SK-N-SH (cell line): ENCODE measurements at regions of chr14 and their contacts with region 1.

Region 1: DNA sequence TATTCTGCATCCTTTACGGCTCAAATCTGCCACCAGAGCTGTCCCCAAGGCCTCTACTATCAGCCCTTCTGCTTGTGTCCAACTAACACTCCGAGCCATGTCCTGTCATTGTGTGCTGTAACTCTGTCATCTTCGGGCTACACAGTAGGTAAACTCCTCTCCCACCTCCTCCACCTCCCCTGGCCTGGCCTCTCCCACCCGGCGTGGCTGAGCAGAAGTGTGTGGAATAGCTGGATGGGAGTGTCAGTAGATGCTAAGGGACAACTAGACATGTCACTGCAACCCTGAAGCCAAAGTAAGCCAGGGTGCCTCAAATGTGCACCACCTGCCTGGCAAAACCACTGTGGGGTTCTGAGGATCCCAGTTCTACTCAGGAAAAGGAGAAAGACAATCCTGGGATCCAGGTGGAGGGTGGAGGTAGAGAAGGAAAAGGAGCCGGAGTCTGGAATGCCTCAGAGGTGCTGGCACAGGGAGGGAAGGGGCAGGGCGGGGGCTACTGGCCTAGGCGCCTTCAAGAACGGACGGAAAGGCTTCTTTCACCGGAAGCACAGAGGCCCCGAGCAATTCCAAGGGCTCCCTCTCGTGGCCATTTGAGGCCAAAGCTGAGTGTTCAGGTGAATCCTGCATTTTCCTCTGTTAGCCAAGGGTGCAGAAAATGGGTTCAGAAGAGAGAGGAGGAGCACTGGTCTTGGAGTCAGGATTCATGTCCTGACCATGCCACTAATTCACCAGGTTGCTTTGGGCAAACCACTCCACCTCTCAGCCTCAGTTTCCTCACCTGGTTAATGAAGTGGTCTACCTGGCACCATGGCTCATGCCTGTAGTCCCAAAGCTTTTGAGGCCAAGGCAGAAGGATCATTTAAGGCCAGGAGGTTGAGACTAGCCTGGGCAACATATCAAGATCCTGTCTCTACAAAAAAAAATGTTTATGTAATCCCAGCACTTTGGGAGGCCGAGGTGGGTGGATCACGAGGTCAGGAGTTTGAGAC is 20.5 kb upstream of the FAM181A start:
- DNase-seq: peak; percentile 77
- H3K4me3 ChIP-seq: no peak overlapping the region
- H3K27ac ChIP-seq: no peak overlapping the region
- H3K4me1 ChIP-seq: peaks cover 0 to 7% of the 10 kb centered on the region in 2 experiments; a peak in 1 of 4 replicates
- H3K27me3 ChIP-seq: no peaks in the 10 kb centered on the region
- CTCF ChIP-seq: peak; percentile 59
- EP300 ChIP-seq: no peak
- RAD21 ChIP-seq: peak; percentile 84

Region 2: GRCh38 chr14:93648440-93649168 is 258.0 kb before region 1 on chr14:
- CTCF ChIA-PET with region 1: interaction called, 349 read pairs
- POLR2A ChIA-PET with region 1: no interaction called
- DNase-seq: peak; percentile 38
- H3K4me3 ChIP-seq: no peak overlapping the region
- H3K27ac ChIP-seq: no peak overlapping the region
- H3K4me1 ChIP-seq: no peaks in the 10 kb centered on the region
- H3K27me3 ChIP-seq: no peaks in the 10 kb centered on the region
- CTCF ChIP-seq: no peak
- EP300 ChIP-seq: no peak
- RAD21 ChIP-seq: peak; percentile 72

Region 3: DNA sequence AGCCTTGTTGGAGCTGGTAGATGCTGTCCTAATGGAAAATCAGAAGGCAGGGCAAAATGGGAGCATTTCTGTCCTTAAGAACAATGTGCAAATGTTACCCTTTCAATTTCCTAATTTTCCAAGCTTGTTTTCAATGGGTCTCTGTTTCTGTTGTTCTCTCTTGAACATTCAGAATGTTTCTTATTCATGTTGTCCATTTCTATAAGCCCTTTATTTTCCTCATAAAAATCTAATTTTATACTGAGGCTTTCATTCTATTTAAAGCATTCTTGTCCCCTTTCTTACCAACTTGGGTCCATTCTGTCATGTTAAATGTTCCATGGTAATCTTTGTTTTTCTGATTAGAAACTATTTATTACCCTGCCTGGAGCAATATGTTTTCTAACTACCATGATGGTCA is 243.3 kb before region 1 on chr14:
- CTCF ChIA-PET with region 1: interaction called, 10 read pairs
- POLR2A ChIA-PET with region 1: no interaction called
- DNase-seq: no peak
- H3K4me3 ChIP-seq: no peak overlapping the region
- H3K27ac ChIP-seq: no peak overlapping the region
- H3K4me1 ChIP-seq: no peaks in the 10 kb centered on the region
- H3K27me3 ChIP-seq: no peaks in the 10 kb centered on the region
- CTCF ChIP-seq: no peak
- EP300 ChIP-seq: no peak
- RAD21 ChIP-seq: no peak

Region 4: GRCh38 chr14:93716746-93717667 is 189.6 kb before region 1 on chr14:
- CTCF ChIA-PET with region 1: interaction called, 10 read pairs
- POLR2A ChIA-PET with region 1: no interaction called
- DNase-seq: peak; percentile 28
- H3K4me3 ChIP-seq: no peak overlapping the region
- H3K27ac ChIP-seq: no peak overlapping the region; a peak in 1 of 4 replicates
- H3K4me1 ChIP-seq: peaks cover 0 to 9% of the 10 kb centered on the region in 2 experiments; a peak in 1 of 4 replicates
- H3K27me3 ChIP-seq: no peaks in the 10 kb centered on the region
- CTCF ChIP-seq: no peak
- EP300 ChIP-seq: no peak
- RAD21 ChIP-seq: no peak

Region 5: DNA sequence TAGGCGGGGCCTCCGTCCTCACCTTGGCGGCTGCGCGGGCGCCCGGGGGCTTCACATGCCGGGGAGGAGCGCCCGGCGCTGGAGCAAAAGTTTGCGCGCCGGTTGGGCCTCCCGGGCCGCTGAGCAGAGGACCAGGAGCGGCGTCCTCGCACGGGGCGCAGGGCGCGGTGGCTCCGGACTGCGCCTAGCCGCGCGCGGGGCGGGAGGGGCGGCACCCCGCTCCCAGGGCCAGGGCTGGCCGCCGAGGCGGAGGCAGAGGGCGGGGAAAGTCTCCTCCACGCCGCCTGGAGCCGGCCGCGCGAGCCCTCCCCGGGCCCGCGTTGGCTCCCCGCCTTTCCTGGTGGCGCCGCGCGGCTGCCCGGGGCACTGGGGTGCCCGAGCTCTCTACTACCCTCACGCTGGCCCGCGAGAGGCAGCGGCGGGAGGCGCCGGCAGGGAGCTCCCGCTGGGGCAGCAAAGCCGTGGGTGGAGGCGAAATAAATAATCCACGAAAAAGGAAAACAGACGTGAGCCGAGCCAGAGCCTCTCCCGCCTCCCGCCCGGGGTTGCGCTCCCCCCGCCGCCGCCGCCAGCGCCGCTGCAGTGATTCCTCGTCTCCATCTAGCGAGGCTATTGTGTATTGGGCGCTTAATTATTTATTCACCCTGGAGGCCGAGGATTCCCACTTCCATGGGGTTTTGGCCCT is 118.0 kb before region 1 on chr14:
- CTCF ChIA-PET with region 1: interaction called, 15 read pairs
- POLR2A ChIA-PET with region 1: no interaction called
- DNase-seq: peak; percentile 90
- H3K4me3 ChIP-seq: peak overlapping the region in 1 of 2 experiments; percentile 48; a peak in 2 of 4 replicates
- H3K27ac ChIP-seq: peak overlapping the region in 1 of 2 experiments; percentile 91; a peak in 2 of 4 replicates
- H3K4me1 ChIP-seq: peaks cover 0 to 53% of the 10 kb centered on the region in 2 experiments; a peak in 2 of 4 replicates
- H3K27me3 ChIP-seq: no peaks in the 10 kb centered on the region
- CTCF ChIP-seq: no peak
- EP300 ChIP-seq: no peak; a peak in 1 of 4 replicates
- RAD21 ChIP-seq: peak; percentile 71

Region 6: GRCh38 chr14:93892923-93893558 is 13.6 kb before region 1 on chr14:
- CTCF ChIA-PET with region 1: interaction called, 33 read pairs
- POLR2A ChIA-PET with region 1: interaction called, 5 read pairs
- DNase-seq: peak; percentile 78
- H3K4me3 ChIP-seq: peak overlapping the region in 1 of 2 experiments; percentile 25; a peak in 2 of 4 replicates
- H3K27ac ChIP-seq: peak overlapping the region in 1 of 2 experiments; percentile 99; a peak in 2 of 4 replicates
- H3K4me1 ChIP-seq: peaks cover 0 to 62% of the 10 kb centered on the region in 2 experiments; a peak in 2 of 4 replicates
- H3K27me3 ChIP-seq: no peaks in the 10 kb centered on the region; the same call in 1 of the 2 replicates
- CTCF ChIP-seq: peak; percentile 95
- EP300 ChIP-seq: no peak
- RAD21 ChIP-seq: peak; percentile 75

Region 7: DNA sequence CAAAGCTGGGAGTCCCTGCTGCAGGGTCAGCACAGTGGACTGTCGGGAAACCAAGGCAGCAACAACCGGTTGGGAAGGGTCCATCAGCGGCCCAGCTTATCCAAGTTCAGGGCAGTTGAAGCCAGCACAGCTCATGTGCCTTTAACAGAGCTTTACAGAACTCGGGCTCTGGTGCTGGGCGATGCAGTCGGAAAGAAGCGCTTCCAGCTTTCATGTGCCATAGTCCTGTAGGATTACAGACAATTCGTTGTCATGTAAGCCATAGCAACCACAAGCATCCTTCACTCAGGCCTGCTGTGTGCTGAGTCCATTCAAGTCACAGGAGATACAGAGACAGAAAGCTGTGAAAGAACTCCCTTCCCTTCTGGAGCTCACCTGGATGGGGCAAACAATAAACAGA is 17.0 kb after region 1 on chr14:
- CTCF ChIA-PET with region 1: interaction called, 11 read pairs
- POLR2A ChIA-PET with region 1: no interaction called
- DNase-seq: no peak
- H3K4me3 ChIP-seq: no peak overlapping the region
- H3K27ac ChIP-seq: no peak overlapping the region
- H3K4me1 ChIP-seq: no peaks in the 10 kb centered on the region
- H3K27me3 ChIP-seq: no peaks in the 10 kb centered on the region
- CTCF ChIP-seq: no peak
- EP300 ChIP-seq: no peak
- RAD21 ChIP-seq: no peak